CD4-positive, alpha-beta T cell (primary cell): ENCODE measurements at regions of chr13 and their contacts with region 1.

Region 1: DNA sequence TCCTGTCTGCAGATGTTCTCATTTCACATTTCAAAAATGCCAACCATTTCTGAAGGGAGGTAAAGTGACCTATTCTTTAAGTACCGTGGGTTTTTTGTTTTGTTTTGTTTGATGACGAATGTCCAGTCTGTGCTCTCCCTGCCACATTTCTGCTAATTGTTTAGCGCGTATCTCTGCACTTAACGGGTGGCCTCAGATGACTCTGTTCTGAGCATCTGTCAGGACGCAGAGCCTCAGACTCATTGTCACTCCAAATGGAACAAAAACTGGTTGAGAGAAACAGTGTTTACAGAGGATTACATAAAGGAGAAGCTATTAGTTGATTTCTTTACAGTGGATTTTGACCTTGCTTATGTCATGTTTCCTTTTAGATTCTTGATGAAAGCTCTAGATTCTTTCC is 23.7 kb downstream of the TPP2 start:
- DNase-seq: no peak
- ATAC-seq: no peak
- H3K4me3 ChIP-seq: no peak overlapping the region
- H3K4me3 Mint-ChIP-seq: no peak overlapping the region
- H3K27ac ChIP-seq: no peak overlapping the region
- H3K27ac Mint-ChIP-seq: peak overlapping the region; percentile 20
- H3K4me1 ChIP-seq: no peaks in the 10 kb centered on the region
- H3K4me1 Mint-ChIP-seq: peaks cover 4% of the 10 kb centered on the region
- H3K27me3 ChIP-seq: no peaks in the 10 kb centered on the region
- H3K27me3 Mint-ChIP-seq: no peaks in the 10 kb centered on the region
- CTCF ChIP-seq: no peak

Region 2: DNA sequence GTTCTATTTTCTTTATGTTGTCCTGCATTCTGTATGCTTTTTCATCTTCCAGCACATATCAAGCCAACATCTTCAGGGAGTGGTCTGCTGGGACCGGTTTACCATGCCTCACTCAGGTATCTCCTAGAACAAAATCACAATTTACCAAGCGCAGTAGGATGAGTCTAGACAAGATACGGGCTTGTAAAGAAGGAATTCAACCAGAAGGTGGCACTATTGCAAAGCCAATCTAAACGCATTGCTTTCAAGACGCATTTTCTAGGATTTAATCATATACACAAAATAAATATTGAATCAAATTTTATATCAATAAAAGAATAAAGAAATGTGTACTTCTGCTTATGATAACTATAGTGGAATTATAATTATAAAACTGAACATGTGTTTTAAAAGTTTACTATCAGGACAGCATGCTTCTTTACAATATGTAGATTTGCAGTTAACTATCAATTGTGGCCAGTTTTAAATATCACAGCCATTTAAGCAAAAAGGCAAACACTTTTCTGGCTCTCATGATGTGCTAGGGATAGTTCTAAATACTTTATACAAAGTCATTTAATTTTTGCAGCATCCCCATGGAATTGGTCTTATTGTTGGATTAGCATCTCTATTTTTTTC is 39.9 kb before region 1 on chr13:
- CTCF ChIA-PET with region 1: no interaction called
- POLR2A ChIA-PET with region 1: no interaction called
- intact Hi-C with region 1: loop called (anchors 5 kb)
- DNase-seq: peak in 6 of 14 experiments; percentile 11 to 83 (median 64)
- ATAC-seq: peak; percentile 85
- H3K4me3 ChIP-seq: no peak overlapping the region
- H3K4me3 Mint-ChIP-seq: no peak overlapping the region
- H3K27ac ChIP-seq: no peak overlapping the region
- H3K27ac Mint-ChIP-seq: no peak overlapping the region
- H3K4me1 ChIP-seq: peaks cover 4% of the 10 kb centered on the region
- H3K4me1 Mint-ChIP-seq: peaks cover 8% of the 10 kb centered on the region
- H3K27me3 ChIP-seq: no peaks in the 10 kb centered on the region
- H3K27me3 Mint-ChIP-seq: peaks cover 4% of the 10 kb centered on the region
- CTCF ChIP-seq: peak; percentile 88

Region 3: GRCh38 chr13:102657630-102658029 is 37.1 kb after region 1 on chr13:
- CTCF ChIA-PET with region 1: no interaction called
- POLR2A ChIA-PET with region 1: no interaction called
- intact Hi-C with region 1: loop called in 1 of 2 experiments (anchors 5 kb)
- DNase-seq: peak in 2 of 14 experiments; percentile 9
- ATAC-seq: no peak
- H3K4me3 ChIP-seq: no peak overlapping the region
- H3K4me3 Mint-ChIP-seq: no peak overlapping the region
- H3K27ac ChIP-seq: no peak overlapping the region
- H3K27ac Mint-ChIP-seq: no peak overlapping the region
- H3K4me1 ChIP-seq: no peaks in the 10 kb centered on the region
- H3K4me1 Mint-ChIP-seq: peaks cover 4% of the 10 kb centered on the region
- H3K27me3 ChIP-seq: no peaks in the 10 kb centered on the region
- H3K27me3 Mint-ChIP-seq: no peaks in the 10 kb centered on the region
- CTCF ChIP-seq: peak; percentile 13

Region 4: DNA sequence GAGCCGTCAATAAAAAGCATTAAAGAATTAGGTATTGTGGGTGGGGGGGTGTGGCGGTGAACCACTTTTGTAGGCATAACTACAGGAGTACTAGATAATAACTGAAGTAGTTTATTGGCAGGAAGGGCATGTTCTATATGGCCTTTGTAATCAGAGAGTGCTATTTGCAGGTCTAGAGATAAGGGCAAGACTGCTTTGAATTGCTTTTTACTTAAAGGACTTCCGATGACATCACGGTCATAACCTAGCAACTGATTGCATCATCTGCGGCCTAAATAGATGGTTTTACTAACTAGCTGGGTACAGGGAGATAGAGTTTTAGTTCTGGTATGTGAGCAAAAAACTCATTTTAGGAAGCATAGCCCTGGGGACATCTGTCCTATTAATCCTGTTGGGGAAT is 49.6 kb after region 1 on chr13:
- CTCF ChIA-PET with region 1: no interaction called
- POLR2A ChIA-PET with region 1: no interaction called
- intact Hi-C with region 1: loop called in 1 of 2 experiments (anchors 5 kb)
- DNase-seq: no peak
- ATAC-seq: no peak
- H3K4me3 ChIP-seq: no peak overlapping the region
- H3K4me3 Mint-ChIP-seq: no peak overlapping the region
- H3K27ac ChIP-seq: no peak overlapping the region
- H3K27ac Mint-ChIP-seq: no peak overlapping the region
- H3K4me1 ChIP-seq: no peaks in the 10 kb centered on the region
- H3K4me1 Mint-ChIP-seq: no peaks in the 10 kb centered on the region
- H3K27me3 ChIP-seq: no peaks in the 10 kb centered on the region
- H3K27me3 Mint-ChIP-seq: no peaks in the 10 kb centered on the region
- CTCF ChIP-seq: no peak